ENCODE measurements at regions of chr10 and their contacts with region 1.

Region 1: DNA sequence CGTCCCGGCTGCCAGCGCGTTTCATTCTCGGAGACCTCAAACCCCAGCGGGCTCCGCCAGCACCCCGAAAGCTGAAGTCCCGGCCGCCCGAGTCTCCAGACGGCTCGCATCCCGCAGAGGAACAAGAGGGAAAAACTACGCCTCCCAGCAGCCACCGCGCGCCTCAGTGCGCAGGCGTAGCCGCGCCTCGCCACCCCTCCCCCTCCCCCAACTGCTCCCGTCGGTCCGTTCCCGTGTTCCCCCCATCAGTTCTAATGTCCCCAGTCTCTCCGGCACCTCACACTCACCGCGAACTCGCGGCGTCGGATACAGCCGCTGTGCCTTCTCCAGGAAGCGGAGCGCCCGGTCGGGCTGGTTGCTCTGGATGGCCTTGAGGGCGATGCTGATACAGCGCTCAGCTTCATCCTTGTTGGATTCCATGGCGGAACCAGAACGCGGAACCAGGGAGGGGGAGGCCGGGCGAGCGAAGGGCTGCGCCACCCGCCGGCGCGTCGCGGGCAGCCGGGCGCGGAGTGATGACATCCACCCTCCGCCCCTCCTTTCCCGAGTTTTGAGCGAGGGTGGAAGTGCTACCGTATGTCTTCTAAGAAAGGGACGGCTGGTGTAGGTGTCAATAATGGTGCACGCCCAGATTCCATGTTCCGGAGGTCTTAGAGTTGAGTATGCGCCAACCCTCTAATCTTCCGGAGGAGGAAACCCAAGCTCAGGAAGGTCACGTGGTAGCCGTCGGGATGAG is at the start of gene DNAJB12:
- DNase-seq: peak; percentile 97
- total RNA-seq, gene DNAJB12: 25.3 to 26.4 TPM

Region 2: DNA sequence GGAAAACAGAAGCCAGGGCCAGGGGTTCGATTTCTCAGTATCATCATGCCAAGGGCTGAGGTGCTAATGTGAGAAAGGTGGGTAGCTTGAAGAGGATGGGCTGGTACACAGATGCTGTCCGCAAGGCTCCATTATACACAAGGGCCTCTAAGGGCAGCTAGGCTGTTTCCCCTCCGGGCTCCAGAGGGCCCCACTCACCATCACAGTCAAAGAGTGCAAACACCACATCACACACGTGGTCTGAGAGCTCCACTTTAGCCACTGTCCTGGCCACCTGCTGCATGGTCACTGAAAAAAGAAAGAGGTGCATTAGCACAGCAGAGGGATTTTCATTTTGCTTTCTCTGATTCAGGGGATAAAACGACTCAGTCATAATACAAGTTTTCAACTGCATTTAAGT is 20.9 kb after region 1 on chr10:
- intact Hi-C with region 1: no loop called
- DNase-seq: no peak

Region 3: DNA sequence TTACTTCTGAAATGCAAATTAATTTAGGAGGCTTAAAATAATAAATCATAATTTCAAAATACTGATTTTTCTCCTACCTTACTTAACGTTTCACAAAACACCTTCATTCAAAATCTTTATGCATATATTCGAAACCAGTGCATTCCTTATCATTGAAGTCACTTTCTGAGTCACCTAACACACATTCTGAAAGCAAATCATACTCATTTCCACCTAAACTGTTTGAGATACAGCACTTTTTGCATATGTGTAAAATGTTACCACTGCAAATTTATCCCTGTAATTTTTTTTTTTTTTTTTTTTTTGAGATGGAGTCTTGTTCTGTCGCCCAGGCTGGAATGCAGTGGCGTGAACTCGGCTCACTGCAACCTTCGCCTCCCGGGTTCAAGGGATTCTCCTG is 1125.5 kb after region 1 on chr10:
- intact Hi-C with region 1: loop called in 1 of 2 experiments (anchors 10 kb)
- DNase-seq: no peak

Region 4: GRCh38 chr10:73647191-73647874 is 1292.7 kb after region 1 on chr10:
- intact Hi-C with region 1: no loop called
- DNase-seq: peak; percentile 91